Head of caudate nucleus (tissue), 42 donors: ENCODE measurements at regions of chr22 and their contacts with region 1.

Region 1: DNA sequence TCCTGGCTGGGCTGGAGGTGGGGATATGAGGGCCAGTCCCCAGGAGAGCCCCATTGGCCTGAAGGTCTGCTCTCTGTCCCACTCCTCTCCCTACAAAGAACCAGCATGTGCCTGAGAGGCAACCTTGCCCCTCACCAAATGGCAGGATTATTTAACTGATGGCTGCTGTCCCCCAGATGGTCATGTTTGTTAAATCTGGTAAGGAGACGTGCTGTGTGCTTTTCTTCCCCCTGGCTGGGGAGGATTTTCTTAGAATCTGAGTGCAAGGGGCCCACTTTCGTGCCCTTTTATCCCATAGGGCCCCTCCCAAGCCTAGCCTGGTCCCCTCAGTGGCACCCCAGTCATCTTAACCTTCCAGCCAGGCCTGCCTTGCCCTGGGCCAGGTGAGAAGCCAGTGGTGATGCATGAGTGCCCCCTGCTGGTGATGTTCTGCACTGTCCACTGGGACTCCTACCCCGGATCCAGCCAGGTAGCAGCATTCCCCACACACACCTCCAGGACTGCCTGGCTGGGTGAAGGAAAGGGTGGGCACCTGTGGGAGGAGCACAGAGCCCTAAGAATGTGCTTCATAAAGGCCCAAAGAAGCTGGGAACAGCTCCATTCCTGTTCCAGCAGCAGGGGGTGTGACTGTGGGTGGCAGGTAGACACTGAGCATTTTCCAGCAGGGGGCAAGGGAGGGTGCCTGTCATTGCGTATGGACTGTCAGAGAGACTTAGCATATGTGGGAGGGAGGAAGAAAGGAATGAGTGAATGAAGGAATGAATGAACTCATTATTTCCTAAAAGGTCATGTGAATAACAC is 28.9 kb downstream of the MFNG start:
- DNase-seq: peak; percentile 53 to 91 (median 79)

Region 2: GRCh38 chr22:37316875-37317371 is 140.4 kb before region 1 on chr22:
- intact Hi-C with region 1: loop called (anchors 5 kb)
- DNase-seq: peak; percentile 41 to 89 (median 76)